ENCODE measurements at regions of chr3 and their contacts with region 1.

Region 1: DNA sequence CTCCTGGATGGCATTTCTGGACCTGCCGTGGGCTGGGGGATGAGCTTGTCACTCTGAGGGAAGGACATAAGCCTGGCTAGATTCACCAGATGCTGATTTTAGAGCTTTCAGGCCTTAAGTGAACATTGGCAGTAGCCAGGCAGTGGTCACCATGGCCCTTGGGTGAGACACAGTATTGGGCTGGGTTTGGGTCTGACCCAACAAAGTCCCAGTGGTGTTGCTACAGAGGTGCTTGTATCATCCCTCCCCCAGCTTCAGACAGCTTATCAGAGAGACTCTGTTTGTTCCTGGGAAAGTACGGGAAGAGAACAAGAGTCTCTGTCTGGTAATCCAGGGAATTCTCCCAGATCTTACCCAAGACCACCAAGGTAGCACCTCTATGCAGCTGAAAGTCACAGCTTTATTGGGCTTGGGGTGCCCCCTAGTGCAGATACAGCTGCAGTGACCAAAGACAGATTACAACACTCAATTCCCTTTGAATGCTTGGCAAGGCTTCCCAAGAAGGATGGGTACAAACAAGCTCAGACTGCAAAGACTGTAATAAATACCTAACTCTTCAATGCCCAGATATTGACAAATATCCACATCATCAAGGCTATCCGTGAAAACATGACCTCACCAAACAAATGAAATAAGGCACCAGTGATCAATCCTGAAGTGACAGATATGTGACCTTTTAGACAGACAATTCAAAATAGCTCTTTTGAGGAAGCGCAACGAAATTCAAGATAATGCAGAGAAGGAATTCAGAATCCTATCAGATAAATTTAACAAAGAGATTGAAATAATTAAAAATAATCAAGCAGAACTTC is 9.9 kb upstream of the RUVBL1 start:
- DNase-seq: no peak
- H3K4me3 ChIP-seq: no peak overlapping the region
- CTCF ChIP-seq: peak; percentile 71

Region 2: GRCh38 chr3:126926684-126927400 is 1206.6 kb before region 1 on chr3:
- CTCF ChIA-PET with region 1: no interaction called
- POLR2A ChIA-PET with region 1: no interaction called
- DNase-seq: peak; percentile 28
- H3K4me3 ChIP-seq: no peak overlapping the region
- CTCF ChIP-seq: peak; percentile 44

Region 3: GRCh38 chr3:127652231-127652995 is 481.1 kb before region 1 on chr3:
- CTCF ChIA-PET with region 1: interaction called, 13 read pairs
- POLR2A ChIA-PET with region 1: no interaction called
- DNase-seq: no peak
- H3K4me3 ChIP-seq: no peak overlapping the region
- CTCF ChIP-seq: peak; percentile 81

Region 4: GRCh38 chr3:128075516-128076482 is 57.7 kb before region 1 on chr3:
- CTCF ChIA-PET with region 1: interaction called, 25 read pairs
- POLR2A ChIA-PET with region 1: interaction called, 5 read pairs
- DNase-seq: no peak
- H3K4me3 ChIP-seq: peak overlapping the region; percentile 32
- CTCF ChIP-seq: peak; percentile 96

Region 5: GRCh38 chr3:128095222-128095703 is 38.2 kb before region 1 on chr3:
- CTCF ChIA-PET with region 1: interaction called, 129 read pairs
- POLR2A ChIA-PET with region 1: no interaction called
- DNase-seq: peak; percentile 82
- H3K4me3 ChIP-seq: no peak overlapping the region
- CTCF ChIP-seq: peak; percentile 90

Region 6: DNA sequence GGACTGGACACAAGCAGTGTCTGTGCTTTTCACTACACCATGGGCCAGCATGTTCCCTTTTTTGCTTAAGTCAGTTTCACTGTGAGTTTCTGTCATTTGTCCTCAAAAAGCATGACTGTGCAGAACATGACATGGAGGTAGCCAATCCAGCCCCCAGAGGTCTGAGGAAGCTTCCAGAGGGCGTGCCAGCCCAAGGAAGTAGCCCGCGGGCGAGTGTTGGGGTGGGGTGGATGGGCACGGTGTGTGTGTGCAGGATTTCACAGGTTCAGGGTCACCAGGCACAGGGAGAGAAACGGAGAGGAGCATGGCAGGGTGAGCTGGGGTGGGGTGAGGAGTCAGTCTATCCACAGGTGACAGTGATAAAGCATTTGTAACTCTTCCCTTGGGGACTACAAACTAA is 11.9 kb after region 1 on chr3:
- CTCF ChIA-PET with region 1: interaction called, 14 read pairs
- POLR2A ChIA-PET with region 1: no interaction called
- DNase-seq: no peak
- H3K4me3 ChIP-seq: no peak overlapping the region
- CTCF ChIP-seq: no peak

Measured in AG04449 (cell line).